CD4-positive, alpha-beta memory T cell (primary cell): ENCODE measurements at regions of chr5 and their contacts with region 1.

Region 1: GRCh38 chr5:55037046-55037771 is 13.2 kb downstream of the GZMK start:
- DNase-seq: peak; percentile 36 to 72 (median 54)
- H3K4me3 ChIP-seq: no peak overlapping the region
- H3K4me3 Mint-ChIP-seq: peak overlapping the region in 6 of 8 donors; percentile 25 to 65 (median 49)
- H3K27ac ChIP-seq: peak overlapping the region; percentile 19
- H3K27ac Mint-ChIP-seq: peak overlapping the region; percentile 24 to 96 (median 88)
- H3K4me1 ChIP-seq: peaks cover 25% of the 10 kb centered on the region
- H3K4me1 Mint-ChIP-seq: peaks cover 23 to 42% (median 32%) of the 10 kb centered on the region in 4 donors
- H3K27me3 ChIP-seq: no peaks in the 10 kb centered on the region
- H3K27me3 Mint-ChIP-seq: no peaks in the 10 kb centered on the region

Region 2: DNA sequence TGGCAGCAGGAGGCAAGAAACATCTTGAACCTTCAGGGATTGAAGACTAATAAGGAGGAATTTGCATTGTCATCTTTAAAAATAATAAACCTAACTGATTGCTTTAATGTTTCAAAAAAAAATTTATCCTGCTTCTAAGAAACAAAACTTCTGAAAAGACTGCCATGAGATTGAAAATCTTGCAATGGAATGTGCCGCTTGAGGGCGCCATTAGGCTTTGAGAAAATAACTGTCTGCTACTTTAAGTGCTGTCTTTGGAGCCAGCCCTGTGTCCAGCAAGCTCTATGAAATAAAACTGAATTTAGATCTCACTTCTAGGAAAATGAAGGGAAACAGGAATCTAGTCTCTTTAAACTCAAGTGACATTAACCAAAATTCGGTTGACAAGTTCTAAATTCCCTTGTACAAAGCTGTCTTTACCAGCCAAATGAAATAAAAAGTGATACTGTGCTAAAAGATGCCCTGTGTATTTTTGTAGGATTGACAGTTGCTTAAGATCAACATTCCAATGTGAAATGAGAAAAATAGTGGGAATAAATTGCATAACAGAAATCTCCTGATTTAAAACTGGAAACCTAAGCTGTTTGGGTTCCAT is 131.2 kb before region 1 on chr5:
- CTCF ChIA-PET with region 1: interaction called, 6 read pairs
- POLR2A ChIA-PET with region 1: no interaction called
- intact Hi-C with region 1: loop called (anchors 1 kb)
- DNase-seq: peak; percentile 51 to 62 (median 57)
- H3K4me3 ChIP-seq: no peak overlapping the region
- H3K4me3 Mint-ChIP-seq: no peak overlapping the region
- H3K27ac ChIP-seq: no peak overlapping the region
- H3K27ac Mint-ChIP-seq: no peak overlapping the region
- H3K4me1 ChIP-seq: peaks cover 9% of the 10 kb centered on the region
- H3K4me1 Mint-ChIP-seq: peaks cover 4 to 9% (median 8%) of the 10 kb centered on the region in 4 donors
- H3K27me3 ChIP-seq: no peaks in the 10 kb centered on the region
- H3K27me3 Mint-ChIP-seq: peaks cover 5 to 8% of the 10 kb centered on the region in 2 donors

Region 3: GRCh38 chr5:55052383-55052931 is 15.2 kb after region 1 on chr5:
- CTCF ChIA-PET with region 1: interaction called, 14 read pairs
- POLR2A ChIA-PET with region 1: interaction called, 5 read pairs
- intact Hi-C with region 1: loop called (anchors 2 kb)
- DNase-seq: no peak
- H3K4me3 ChIP-seq: no peak overlapping the region
- H3K4me3 Mint-ChIP-seq: no peak overlapping the region
- H3K27ac ChIP-seq: no peak overlapping the region
- H3K27ac Mint-ChIP-seq: no peak overlapping the region
- H3K4me1 ChIP-seq: no peaks in the 10 kb centered on the region
- H3K4me1 Mint-ChIP-seq: no peaks in the 10 kb centered on the region
- H3K27me3 ChIP-seq: no peaks in the 10 kb centered on the region
- H3K27me3 Mint-ChIP-seq: no peaks in the 10 kb centered on the region

Region 4: GRCh38 chr5:55096861-55097260 is 59.7 kb after region 1 on chr5:
- CTCF ChIA-PET with region 1: interaction called, 20 read pairs
- POLR2A ChIA-PET with region 1: interaction called, 54 read pairs
- intact Hi-C with region 1: loop called (anchors 1 kb)
- DNase-seq: peak; percentile 56 to 72 (median 63)
- H3K4me3 ChIP-seq: peak overlapping the region in 1 of 2 donors; percentile 47
- H3K4me3 Mint-ChIP-seq: peak overlapping the region; percentile 20 to 89 (median 69)
- H3K27ac ChIP-seq: no peak overlapping the region
- H3K27ac Mint-ChIP-seq: peak overlapping the region; percentile 74 to 96 (median 90)
- H3K4me1 ChIP-seq: peaks cover 65% of the 10 kb centered on the region
- H3K4me1 Mint-ChIP-seq: peaks cover 72 to 92% (median 82%) of the 10 kb centered on the region in 4 donors
- H3K27me3 ChIP-seq: no peaks in the 10 kb centered on the region
- H3K27me3 Mint-ChIP-seq: no peaks in the 10 kb centered on the region

Region 5: GRCh38 chr5:55146543-55147151 is 109.4 kb after region 1 on chr5:
- CTCF ChIA-PET with region 1: interaction called, 14 read pairs
- POLR2A ChIA-PET with region 1: interaction called, 6 read pairs
- intact Hi-C with region 1: no loop called
- DNase-seq: peak; percentile 77 to 83 (median 80)
- H3K4me3 ChIP-seq: no peak overlapping the region
- H3K4me3 Mint-ChIP-seq: peak overlapping the region in 7 of 8 donors; percentile 11 to 70 (median 48)
- H3K27ac ChIP-seq: no peak overlapping the region
- H3K27ac Mint-ChIP-seq: no peak overlapping the region
- H3K4me1 ChIP-seq: peaks cover 18% of the 10 kb centered on the region
- H3K4me1 Mint-ChIP-seq: peaks cover 12 to 25% (median 15%) of the 10 kb centered on the region in 4 donors
- H3K27me3 ChIP-seq: no peaks in the 10 kb centered on the region
- H3K27me3 Mint-ChIP-seq: peaks cover 0 to 3% of the 10 kb centered on the region in 2 donors

Region 6: DNA sequence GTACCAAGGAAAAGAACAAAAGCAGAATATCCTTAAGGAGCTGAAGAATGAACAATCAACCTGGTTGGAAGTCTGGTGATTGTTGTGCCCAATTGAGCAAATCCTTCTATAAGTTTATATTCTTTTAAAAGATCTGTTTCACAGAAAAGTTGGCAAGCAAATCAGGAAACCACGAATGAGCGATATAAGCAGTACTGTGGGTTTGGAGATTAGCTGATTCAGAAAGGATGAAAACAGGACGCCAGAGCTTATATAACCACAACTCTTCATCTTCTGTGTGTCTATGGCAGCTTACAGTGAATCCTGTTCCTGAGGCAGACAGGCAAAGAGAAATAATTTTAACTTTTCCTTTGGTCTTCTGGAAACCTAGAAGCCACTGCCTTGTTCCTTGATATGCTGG is 613.2 kb after region 1 on chr5:
- CTCF ChIA-PET with region 1: no interaction called
- POLR2A ChIA-PET with region 1: no interaction called
- intact Hi-C with region 1: no loop called
- DNase-seq: peak in 4 of 5 donors; percentile 17 to 50 (median 34)
- H3K4me3 ChIP-seq: no peak overlapping the region
- H3K4me3 Mint-ChIP-seq: peak overlapping the region in 6 of 8 donors; percentile 3 to 66 (median 32)
- H3K27ac ChIP-seq: no peak overlapping the region
- H3K27ac Mint-ChIP-seq: peak overlapping the region; percentile 7 to 85 (median 43)
- H3K4me1 ChIP-seq: peaks cover 15% of the 10 kb centered on the region
- H3K4me1 Mint-ChIP-seq: peaks cover 10 to 26% (median 21%) of the 10 kb centered on the region in 4 donors
- H3K27me3 ChIP-seq: no peaks in the 10 kb centered on the region
- H3K27me3 Mint-ChIP-seq: no peaks in the 10 kb centered on the region